ENCODE measurements at regions of chr4 and their contacts with region 1.

Region 1: GRCh38 chr4:99563310-99564186 is at the start of gene TRMT10A:
- DNase-seq: peak; percentile 98
- ATAC-seq: peak; percentile 93
- H3K4me3 Mint-ChIP-seq: peak within 1 kb of the TSS; percentile 89
- H3K27ac Mint-ChIP-seq: peak within 1 kb of the TSS; percentile 95
- H3K4me1 Mint-ChIP-seq: peaks cover 12% of the 10 kb centered on the region
- H3K27me3 Mint-ChIP-seq: peaks cover 14% of the 10 kb centered on the region
- total RNA-seq, gene TRMT10A: 7.8 to 9.8 TPM

Region 2: DNA sequence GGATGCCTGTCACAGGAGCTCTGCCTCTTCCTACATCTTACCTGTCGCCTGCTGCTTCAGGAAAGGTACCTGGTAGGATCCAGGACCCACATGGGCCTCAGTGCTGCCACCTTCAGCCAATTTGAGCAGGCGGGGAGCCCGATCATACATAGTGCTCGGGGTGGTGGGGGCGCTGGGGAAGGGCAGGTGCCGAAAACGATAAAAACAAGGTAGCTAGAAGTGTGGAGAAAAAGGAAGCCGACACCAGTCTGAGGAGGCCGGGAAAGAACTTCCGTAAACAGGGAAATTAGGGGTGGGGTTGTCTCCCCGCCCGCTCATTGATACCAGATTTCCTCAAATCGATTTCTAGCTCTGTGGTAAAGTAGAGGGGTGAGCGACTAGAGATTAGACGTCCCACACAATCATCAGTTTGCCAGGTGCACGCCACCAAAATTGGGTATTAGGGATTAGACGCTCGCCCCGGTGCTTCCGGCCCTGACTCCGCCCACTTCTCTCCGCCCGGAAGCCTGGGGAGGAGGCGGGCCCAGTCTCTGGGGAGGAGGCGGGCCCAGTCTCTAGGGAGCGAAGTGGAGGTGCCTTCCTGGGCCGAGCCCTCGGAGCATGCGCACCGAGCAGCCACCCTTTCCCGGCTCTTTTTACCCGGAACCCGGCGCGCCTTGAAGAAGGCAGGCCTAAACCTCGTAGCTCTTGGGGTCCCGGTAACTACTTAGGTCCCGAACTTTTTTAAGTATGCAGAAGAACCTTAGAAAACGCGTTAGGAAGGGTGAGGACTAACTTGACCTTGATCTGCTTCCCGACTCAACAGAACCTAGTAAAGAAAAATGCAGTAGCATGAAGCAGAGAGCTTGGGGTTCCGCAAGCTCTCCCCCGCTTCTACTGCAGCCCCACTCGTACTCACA is 1420.3 kb before region 1 on chr4 and contains the start of gene STPG2:
- CTCF ChIA-PET with region 1: no interaction called
- POLR2A ChIA-PET with region 1: no interaction called
- intact Hi-C with region 1: loop called in 1 of 2 experiments (anchors 1 kb)
- DNase-seq: peak; percentile 96
- ATAC-seq: peak; percentile 100
- H3K4me3 Mint-ChIP-seq: peak within 1 kb of the TSS; percentile 96
- H3K27ac Mint-ChIP-seq: peak within 1 kb of the TSS; percentile 99
- H3K4me1 Mint-ChIP-seq: peaks cover 22% of the 10 kb centered on the region
- H3K27me3 Mint-ChIP-seq: no peaks in the 10 kb centered on the region
- total RNA-seq, gene STPG2: 0.14 to 0.25 TPM

Region 3: DNA sequence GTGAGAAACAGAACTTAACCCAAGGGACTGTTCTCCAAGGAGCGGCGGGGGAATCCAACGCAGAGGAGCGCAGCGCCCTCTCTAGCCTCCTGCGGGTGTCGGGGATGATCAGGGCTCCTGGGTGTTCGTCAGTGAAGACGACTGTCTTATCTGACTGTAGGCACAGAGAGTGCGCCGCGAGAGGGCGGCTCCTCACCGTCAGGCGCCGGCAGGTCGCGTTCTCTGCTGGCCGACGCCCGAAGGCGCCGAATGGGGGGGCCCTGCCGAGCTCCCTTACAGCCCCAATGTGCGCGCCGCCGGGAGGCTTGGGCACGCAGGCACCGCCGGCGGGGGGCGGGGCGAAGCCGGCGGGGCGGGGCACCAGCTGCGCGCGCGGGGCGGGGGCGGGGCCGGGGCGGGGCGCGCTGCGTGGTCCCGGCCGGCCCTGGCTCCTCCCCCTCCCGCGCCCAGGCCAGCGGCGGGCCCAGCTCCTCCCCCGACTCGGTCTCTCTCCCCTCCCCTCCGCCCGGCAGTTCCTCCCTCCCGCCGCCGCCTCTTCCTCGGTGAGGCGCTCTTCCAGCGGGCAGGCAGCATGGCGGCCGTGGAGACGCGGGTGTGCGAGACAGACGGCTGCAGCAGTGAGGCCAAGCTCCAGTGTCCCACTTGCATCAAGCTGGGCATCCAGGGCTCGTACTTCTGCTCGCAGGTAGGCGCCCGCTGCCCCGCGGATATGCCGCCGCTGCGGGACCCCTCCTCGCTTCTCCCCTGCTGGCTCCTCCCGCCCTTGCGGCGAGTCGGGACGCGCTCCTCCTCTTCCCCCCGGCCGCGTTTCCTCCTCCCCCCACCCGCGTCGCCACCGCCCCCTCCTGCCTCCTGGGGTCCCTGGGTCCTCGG is 568.1 kb before region 1 on chr4 and contains the start of gene METAP1:
- CTCF ChIA-PET with region 1: no interaction called
- POLR2A ChIA-PET with region 1: no interaction called
- intact Hi-C with region 1: loop called in 1 of 2 experiments (anchors 5 kb)
- DNase-seq: peak; percentile 98
- ATAC-seq: peak; percentile 91
- H3K4me3 Mint-ChIP-seq: peak within 1 kb of the TSS; percentile 81
- H3K27ac Mint-ChIP-seq: peak within 1 kb of the TSS; percentile 95
- H3K4me1 Mint-ChIP-seq: peaks cover 40% of the 10 kb centered on the region
- H3K27me3 Mint-ChIP-seq: no peaks in the 10 kb centered on the region
- total RNA-seq, gene METAP1: 67.9 to 75.2 TPM

Region 4: DNA sequence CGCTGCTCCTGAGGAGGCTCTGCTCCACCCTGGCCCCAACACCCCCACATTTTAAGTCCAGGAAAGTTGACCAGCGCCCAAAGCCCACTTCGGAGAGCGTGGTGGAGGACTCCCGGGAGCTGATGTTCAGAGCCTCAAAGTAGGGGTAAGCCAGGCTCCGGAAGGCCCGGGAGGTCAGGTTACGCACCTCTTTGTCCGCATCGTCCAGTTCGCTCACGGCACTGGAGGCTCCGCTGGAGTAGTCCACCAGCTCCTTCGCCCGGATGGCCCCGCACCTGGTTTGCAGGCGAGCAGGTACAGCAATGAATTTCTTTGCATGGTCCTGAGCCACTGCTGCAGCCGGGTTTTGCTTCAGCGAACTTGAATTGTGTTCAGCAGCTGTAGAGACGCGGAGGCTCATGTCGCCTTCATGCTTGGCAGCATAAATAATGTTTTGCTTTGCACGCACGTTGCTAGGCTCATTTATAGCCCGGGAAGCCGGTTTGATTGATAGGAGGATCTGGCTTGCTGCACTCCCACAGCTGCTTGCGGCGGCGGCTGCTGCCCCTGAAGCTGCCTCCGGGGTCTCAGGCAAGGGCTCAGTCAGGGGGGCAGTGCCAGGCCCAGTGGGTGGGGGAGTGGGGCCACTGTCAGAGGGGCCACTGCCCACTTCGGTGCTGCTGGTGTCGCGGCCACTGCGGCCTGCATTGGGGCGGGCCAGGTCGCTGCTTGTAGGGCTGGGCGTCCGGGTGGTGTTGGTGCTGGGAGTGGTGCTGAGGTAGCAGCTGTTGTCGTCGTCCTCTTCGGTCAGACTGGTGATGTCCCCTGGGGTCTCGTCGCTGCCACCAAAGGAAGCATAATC is 89.3 kb after region 1 on chr4:
- CTCF ChIA-PET with region 1: no interaction called
- POLR2A ChIA-PET with region 1: no interaction called
- intact Hi-C with region 1: no loop called
- DNase-seq: no peak
- ATAC-seq: no peak
- H3K4me3 Mint-ChIP-seq: no peak overlapping the region
- H3K27ac Mint-ChIP-seq: no peak overlapping the region
- H3K4me1 Mint-ChIP-seq: no peaks in the 10 kb centered on the region
- H3K27me3 Mint-ChIP-seq: peaks cover 2% of the 10 kb centered on the region

Region 5: DNA sequence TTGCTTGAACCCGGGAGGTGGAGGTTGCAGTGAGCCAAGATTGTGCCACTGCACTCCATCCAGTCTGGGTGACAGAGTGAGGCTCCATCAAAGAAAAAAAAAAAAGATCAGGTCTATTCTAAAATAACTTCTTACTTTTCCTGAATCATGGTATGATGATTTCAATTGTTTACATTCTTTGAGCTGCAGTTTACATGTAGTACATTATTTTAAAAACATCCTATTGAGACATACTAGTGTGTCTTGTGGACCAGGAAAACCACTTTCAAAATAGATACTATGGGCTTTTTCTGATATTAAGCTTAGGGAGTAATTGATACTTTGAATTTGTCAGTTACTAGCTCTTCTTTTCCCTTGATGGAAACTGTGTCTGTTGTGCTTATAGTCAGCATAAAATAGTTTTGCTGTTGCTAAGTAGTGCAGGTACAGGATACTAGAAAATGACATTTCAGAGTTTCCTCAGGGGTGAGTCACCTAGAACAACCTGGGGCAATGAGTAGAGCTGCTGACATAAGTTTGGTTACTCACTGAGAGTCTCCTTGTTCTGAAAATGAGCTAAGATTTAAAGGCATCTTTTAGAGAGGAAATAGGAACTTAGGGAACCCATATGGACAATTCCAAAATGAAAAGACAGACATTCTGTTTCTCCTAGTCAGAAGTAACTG is 147.3 kb after region 1 on chr4:
- CTCF ChIA-PET with region 1: interaction called, 4 read pairs
- POLR2A ChIA-PET with region 1: no interaction called
- intact Hi-C with region 1: loop called in 1 of 2 experiments (anchors 2 kb)
- DNase-seq: peak; percentile 5
- ATAC-seq: peak; percentile 100
- H3K4me3 Mint-ChIP-seq: no peak overlapping the region
- H3K27ac Mint-ChIP-seq: no peak overlapping the region
- H3K4me1 Mint-ChIP-seq: peaks cover 13% of the 10 kb centered on the region
- H3K27me3 Mint-ChIP-seq: peaks cover 11% of the 10 kb centered on the region

Region 6: DNA sequence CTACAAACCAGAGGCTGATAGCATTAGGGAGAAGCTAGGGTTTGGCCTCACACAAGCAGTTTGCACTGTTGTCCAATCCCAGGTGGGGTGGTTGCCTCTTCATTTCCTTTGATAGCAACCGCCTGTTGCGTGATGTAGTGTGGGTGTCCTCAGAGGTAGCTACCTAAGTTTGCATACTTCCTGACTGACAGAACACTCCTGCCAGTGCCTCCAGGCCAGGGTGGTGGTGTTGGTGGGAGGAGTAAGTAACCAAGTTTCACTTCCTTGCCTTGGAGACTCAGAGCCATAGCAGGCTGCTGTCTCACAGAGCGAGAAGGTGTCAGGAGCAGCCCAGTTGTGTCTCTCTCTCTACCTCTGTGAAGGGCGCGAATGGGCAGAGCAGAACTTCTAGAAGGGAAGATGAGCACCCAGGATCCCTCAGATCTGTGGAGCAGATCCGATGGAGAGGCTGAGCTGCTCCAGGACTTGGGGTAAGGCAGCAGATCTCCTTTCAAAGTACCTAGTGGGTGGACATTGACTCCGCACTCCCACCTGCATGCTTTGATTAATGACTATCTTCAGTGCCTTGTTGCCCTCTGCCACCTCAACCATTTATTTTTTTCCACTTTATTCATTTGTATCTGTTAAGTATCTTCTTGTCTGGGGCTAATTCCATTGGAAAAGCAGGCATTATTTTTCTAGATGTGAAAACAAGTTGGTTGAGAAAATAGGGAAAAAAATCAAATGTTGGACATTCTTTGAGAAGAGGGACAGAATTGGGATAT is 253.2 kb after region 1 on chr4 and contains the start of gene DAPP1:
- CTCF ChIA-PET with region 1: interaction called, 5 read pairs
- POLR2A ChIA-PET with region 1: interaction called, 7 read pairs
- intact Hi-C with region 1: loop called in 1 of 2 experiments (anchors 1 kb)
- DNase-seq: peak; percentile 88
- ATAC-seq: peak; percentile 93
- H3K4me3 Mint-ChIP-seq: peak within 1 kb of the TSS; percentile 78
- H3K27ac Mint-ChIP-seq: peak within 1 kb of the TSS; percentile 96
- H3K4me1 Mint-ChIP-seq: peaks cover 77% of the 10 kb centered on the region
- H3K27me3 Mint-ChIP-seq: no peaks in the 10 kb centered on the region
- total RNA-seq, gene DAPP1: 24.7 to 25.9 TPM

Region 7: GRCh38 chr4:99894161-99894997 is 330.8 kb after region 1 on chr4 and contains the start of gene LAMTOR3:
- CTCF ChIA-PET with region 1: interaction called, 4 read pairs
- POLR2A ChIA-PET with region 1: interaction called, 8 read pairs
- intact Hi-C with region 1: loop called (anchors 1 kb)
- DNase-seq: peak; percentile 94
- ATAC-seq: peak; percentile 100
- H3K4me3 Mint-ChIP-seq: peak within 1 kb of the TSS; percentile 96
- H3K27ac Mint-ChIP-seq: peak within 1 kb of the TSS; percentile 94
- H3K4me1 Mint-ChIP-seq: peaks cover 32% of the 10 kb centered on the region
- H3K27me3 Mint-ChIP-seq: no peaks in the 10 kb centered on the region
- total RNA-seq, gene LAMTOR3: 28.5 to 30.4 TPM

Region 8: GRCh38 chr4:100093091-100093866 is 529.7 kb after region 1 on chr4:
- CTCF ChIA-PET with region 1: no interaction called
- POLR2A ChIA-PET with region 1: no interaction called
- intact Hi-C with region 1: loop called in 1 of 2 experiments (anchors 10 kb)
- DNase-seq: peak; percentile 94
- ATAC-seq: peak; percentile 94
- H3K4me3 Mint-ChIP-seq: peak overlapping the region; percentile 33
- H3K27ac Mint-ChIP-seq: peak overlapping the region; percentile 94
- H3K4me1 Mint-ChIP-seq: peaks cover 56% of the 10 kb centered on the region
- H3K27me3 Mint-ChIP-seq: peaks cover 1% of the 10 kb centered on the region

Measured in activated CD4-positive, alpha-beta T cell treated with anti-CD3 and anti-CD28 coated beads for 36 hours (primary cell).